GM12878 (cell line): ENCODE measurements at regions of chr19 and their contacts with region 1.

Region 1: GRCh38 chr19:37906869-37907734 is at the start of gene SIPA1L3:
- DNase-seq: peak; percentile 83
- ATAC-seq: peak; percentile 92
- H3K4me3 ChIP-seq: peak within 1 kb of the TSS; percentile 98
- H3K27ac ChIP-seq: peak within 1 kb of the TSS; percentile 64
- H3K4me1 ChIP-seq: peaks cover 25% of the 10 kb centered on the region
- H3K27me3 ChIP-seq: no peaks in the 10 kb centered on the region
- CTCF ChIP-seq: no peak
- EP300 ChIP-seq: 0 out of 4 replicates have a peak, but pooled peaks of 1 of the 2 experiments have one; percentile 6
- POLR2A ChIP-seq: peak; percentile 79
- RAD21 ChIP-seq: no peak
- polyA plus RNA-seq, gene SIPA1L3: 0.24 to 0.63 TPM

Region 2: GRCh38 chr19:37931881-37932655 is 25.0 kb after region 1 on chr19:
- CTCF ChIA-PET with region 1: interaction called, 33 read pairs
- POLR2A ChIA-PET with region 1: interaction called, 25 read pairs
- RAD21 ChIA-PET with region 1: interaction called, 66 read pairs
- SMC1A ChIA-PET with region 1: interaction called, 57 read pairs
- in situ Hi-C with region 1: no loop called
- intact Hi-C with region 1: no loop called
- DNase-seq: no peak
- ATAC-seq: peak; percentile 70
- H3K4me3 ChIP-seq: peak overlapping the region; percentile 69
- H3K27ac ChIP-seq: peak overlapping the region; percentile 87
- H3K4me1 ChIP-seq: peaks cover 46% of the 10 kb centered on the region
- H3K27me3 ChIP-seq: no peaks in the 10 kb centered on the region
- CTCF ChIP-seq: 0 out of 6 replicates have a peak, but pooled peaks of 1 of the 3 experiments have one; percentile 10
- EP300 ChIP-seq: no peak
- POLR2A ChIP-seq: peak; percentile 55
- RAD21 ChIP-seq: no peak

Region 3: GRCh38 chr19:37979547-37980082 is 72.5 kb after region 1 on chr19:
- CTCF ChIA-PET with region 1: interaction called, 183 read pairs
- POLR2A ChIA-PET with region 1: interaction called, 14 read pairs
- RAD21 ChIA-PET with region 1: interaction called, 28 read pairs
- SMC1A ChIA-PET with region 1: interaction called, 16 read pairs
- in situ Hi-C with region 1: loop called (anchors 5 kb)
- intact Hi-C with region 1: no loop called
- DNase-seq: peak; percentile 69
- ATAC-seq: peak; percentile 46
- H3K4me3 ChIP-seq: peak overlapping the region; percentile 38; the same call in 1 of the 2 replicates
- H3K27ac ChIP-seq: peak overlapping the region; percentile 95
- H3K4me1 ChIP-seq: peaks cover 58% of the 10 kb centered on the region
- H3K27me3 ChIP-seq: no peaks in the 10 kb centered on the region
- CTCF ChIP-seq: no peak
- EP300 ChIP-seq: no peak
- POLR2A ChIP-seq: peak; percentile 57; the same call in 1 of the 2 replicates
- RAD21 ChIP-seq: no peak

Region 4: DNA sequence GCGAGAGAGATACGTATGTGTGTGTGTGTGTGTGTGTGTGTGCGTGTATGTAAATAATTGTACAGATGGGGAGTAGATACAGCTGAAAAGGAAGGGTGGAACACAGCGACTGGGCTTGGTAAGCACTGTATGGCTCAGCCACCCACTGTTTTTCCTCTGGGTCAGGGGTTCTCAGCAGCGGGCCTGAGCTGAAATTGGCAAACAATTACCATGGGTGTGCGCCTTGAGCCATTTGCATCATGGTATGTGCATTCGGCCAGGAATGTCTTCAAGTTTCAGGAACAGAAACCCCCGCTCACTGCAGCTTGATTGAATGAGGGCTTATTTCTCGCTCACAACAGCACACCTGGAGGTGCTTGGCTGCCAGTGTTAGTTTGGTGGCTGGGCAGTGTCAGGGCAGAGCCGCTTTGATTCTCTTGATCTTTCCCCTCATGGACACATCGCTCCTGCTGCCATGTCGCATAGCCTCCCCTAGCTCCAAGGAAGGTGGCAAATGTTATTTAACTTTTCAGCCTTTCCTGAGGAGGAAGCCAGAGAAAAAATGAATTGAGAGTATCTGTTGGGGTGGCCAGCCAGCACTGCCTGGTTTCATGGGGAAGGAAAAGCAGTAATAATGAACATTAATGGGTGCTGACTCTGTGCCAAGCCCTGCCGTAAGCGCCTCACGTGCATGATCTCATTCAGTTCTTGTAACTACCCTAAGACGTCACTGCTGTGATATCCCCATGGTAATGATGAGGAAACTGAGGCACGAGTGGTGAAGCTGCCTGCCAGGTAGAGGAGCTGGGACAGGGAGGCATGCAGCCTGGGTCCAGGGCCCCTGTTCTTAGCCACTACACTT is 126.8 kb after region 1 on chr19:
- CTCF ChIA-PET with region 1: interaction called, 10 read pairs
- POLR2A ChIA-PET with region 1: interaction called, 9 read pairs
- RAD21 ChIA-PET with region 1: interaction called, 23 read pairs
- SMC1A ChIA-PET with region 1: interaction called, 8 read pairs
- in situ Hi-C with region 1: no loop called
- intact Hi-C with region 1: no loop called
- DNase-seq: peak; percentile 81
- ATAC-seq: peak; percentile 94
- H3K4me3 ChIP-seq: peak overlapping the region; percentile 11
- H3K27ac ChIP-seq: peak overlapping the region; percentile 69
- H3K4me1 ChIP-seq: peaks cover 39% of the 10 kb centered on the region
- H3K27me3 ChIP-seq: no peaks in the 10 kb centered on the region
- CTCF ChIP-seq: peak; percentile 21 to 51 (median 44); a peak in 4 of 6 replicates
- EP300 ChIP-seq: peak; percentile 40 to 59; a peak in 2 of 4 replicates
- POLR2A ChIP-seq: no peak
- RAD21 ChIP-seq: peak; percentile 35; the same call in 1 of the 2 replicates

Region 5: GRCh38 chr19:38095411-38096308 is 188.6 kb after region 1 on chr19:
- CTCF ChIA-PET with region 1: interaction called, 39 read pairs
- POLR2A ChIA-PET with region 1: no interaction called
- RAD21 ChIA-PET with region 1: interaction called, 10 read pairs
- SMC1A ChIA-PET with region 1: interaction called, 7 read pairs
- in situ Hi-C with region 1: no loop called
- intact Hi-C with region 1: loop called (anchors 5 kb)
- DNase-seq: peak; percentile 17
- ATAC-seq: peak; percentile 87
- H3K4me3 ChIP-seq: no peak overlapping the region
- H3K27ac ChIP-seq: peak overlapping the region; percentile 25; the same call in 1 of the 2 replicates
- H3K4me1 ChIP-seq: no peaks in the 10 kb centered on the region; the same call in 1 of the 2 replicates
- H3K27me3 ChIP-seq: no peaks in the 10 kb centered on the region
- CTCF ChIP-seq: peak; percentile 60 to 69 (median 64)
- EP300 ChIP-seq: no peak
- POLR2A ChIP-seq: no peak
- RAD21 ChIP-seq: peak; percentile 53

Region 6: GRCh38 chr19:38149661-38150061 is 242.6 kb after region 1 on chr19:
- CTCF ChIA-PET with region 1: interaction called, 11 read pairs
- POLR2A ChIA-PET with region 1: no interaction called
- RAD21 ChIA-PET with region 1: interaction called, 4 read pairs
- SMC1A ChIA-PET with region 1: no interaction called
- in situ Hi-C with region 1: no loop called
- intact Hi-C with region 1: loop called (anchors 5 kb)
- DNase-seq: no peak
- ATAC-seq: no peak
- H3K4me3 ChIP-seq: no peak overlapping the region
- H3K27ac ChIP-seq: no peak overlapping the region
- H3K4me1 ChIP-seq: no peaks in the 10 kb centered on the region
- H3K27me3 ChIP-seq: no peaks in the 10 kb centered on the region
- CTCF ChIP-seq: no peak
- EP300 ChIP-seq: no peak
- POLR2A ChIP-seq: no peak
- RAD21 ChIP-seq: no peak

Region 7: GRCh38 chr19:38245826-38246498 is 338.9 kb after region 1 on chr19:
- CTCF ChIA-PET with region 1: interaction called, 46 read pairs
- POLR2A ChIA-PET with region 1: no interaction called
- RAD21 ChIA-PET with region 1: interaction called, 10 read pairs
- SMC1A ChIA-PET with region 1: interaction called, 4 read pairs
- in situ Hi-C with region 1: no loop called
- intact Hi-C with region 1: no loop called
- DNase-seq: no peak
- ATAC-seq: no peak
- H3K4me3 ChIP-seq: no peak overlapping the region
- H3K27ac ChIP-seq: no peak overlapping the region
- H3K4me1 ChIP-seq: no peaks in the 10 kb centered on the region
- H3K27me3 ChIP-seq: no peaks in the 10 kb centered on the region
- CTCF ChIP-seq: no peak
- EP300 ChIP-seq: no peak
- POLR2A ChIP-seq: no peak
- RAD21 ChIP-seq: no peak